ENCODE measurements at regions of chr6 and their contacts with region 1.

Region 1: DNA sequence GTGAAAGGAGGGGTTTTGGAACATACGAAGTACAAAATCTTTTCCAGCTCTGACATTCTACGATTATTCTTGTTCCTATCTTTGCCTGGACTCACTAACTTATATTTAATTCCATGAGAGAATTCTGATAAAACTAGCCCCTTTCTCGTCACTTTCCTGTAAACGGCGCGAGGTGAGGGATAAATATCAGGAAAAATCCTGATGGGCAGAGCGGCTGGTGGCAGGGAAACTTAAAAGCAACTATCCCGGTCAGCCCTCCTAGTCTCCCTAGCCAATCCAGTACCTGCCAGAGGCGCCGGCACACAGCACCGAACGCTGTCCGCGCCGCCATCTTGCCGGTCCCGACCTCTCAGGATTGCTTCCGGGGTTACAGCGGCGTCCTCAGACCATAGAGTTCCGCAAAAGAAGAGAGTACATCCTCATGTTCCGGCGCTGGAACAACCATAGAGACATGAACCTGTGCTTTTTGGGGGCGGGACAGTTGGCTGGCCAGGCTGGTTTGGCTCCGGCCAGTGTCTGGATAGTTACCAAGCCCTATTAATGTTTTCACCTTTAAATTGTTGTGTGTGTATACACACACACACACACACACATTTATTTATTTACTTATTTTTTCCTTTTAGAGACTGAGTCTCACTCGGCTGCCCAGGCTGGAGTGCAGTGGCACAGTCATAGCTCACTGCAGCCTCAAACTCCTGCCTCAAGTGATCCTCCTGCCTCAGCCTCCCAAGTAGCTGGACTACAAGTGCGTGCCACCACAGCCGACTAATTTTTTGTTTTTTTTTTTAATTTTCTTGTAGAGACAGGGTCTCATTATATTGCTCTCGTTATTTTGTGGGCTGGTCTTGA is at the start of gene MRPS10:
- DNase-seq: peak; percentile 94
- H3K4me3 ChIP-seq: peak within 1 kb of the TSS; percentile 49 to 99 (median 92)
- H3K27ac ChIP-seq: peak within 1 kb of the TSS; percentile 77
- H3K4me1 ChIP-seq: peaks cover 5% of the 10 kb centered on the region
- H3K27me3 ChIP-seq: no peaks in the 10 kb centered on the region
- CTCF ChIP-seq: no peak
- POLR2A ChIP-seq: peak; percentile 90
- total RNA-seq, gene MRPS10: 35.3 and 37.7 TPM in 2 replicates

Region 2: DNA sequence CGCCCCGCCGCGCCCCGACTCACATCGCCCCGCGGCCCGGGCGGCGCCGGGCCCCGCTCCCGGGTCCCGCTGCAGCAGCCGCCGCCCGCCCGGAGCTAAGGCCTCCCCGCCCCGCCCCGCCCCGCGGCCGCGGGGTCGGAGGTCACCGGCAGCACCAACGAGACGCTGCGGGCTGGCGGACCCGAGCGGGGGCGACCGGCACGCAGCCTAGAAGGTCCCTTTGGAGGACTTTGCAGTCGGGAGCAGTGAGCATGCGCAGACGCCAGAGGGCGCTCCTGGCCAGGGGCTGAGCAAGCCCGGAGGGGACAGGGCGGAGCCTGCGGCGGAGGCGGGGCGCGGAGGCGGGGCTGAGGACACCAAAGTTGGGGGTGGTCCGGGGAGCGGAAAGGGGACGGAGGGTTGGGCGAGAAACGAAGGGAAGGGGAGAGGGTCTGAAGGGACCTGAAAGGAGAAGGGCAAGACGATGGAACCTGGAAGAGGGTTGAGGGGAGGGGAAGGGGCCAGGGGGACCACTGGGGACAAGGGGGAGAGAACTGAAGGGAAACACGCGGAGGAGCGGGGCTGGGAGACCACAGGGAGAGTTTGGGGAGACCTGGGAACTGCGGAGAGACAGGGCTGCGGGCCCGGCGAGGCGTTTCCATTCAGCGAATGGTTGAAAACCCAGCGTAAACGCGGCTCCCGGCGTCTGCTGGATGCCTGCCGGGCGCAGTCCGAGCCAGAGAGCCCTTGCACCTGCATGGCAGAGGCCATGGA is 437.8 kb before region 1 on chr6 and contains the start of gene FRS3:
- CTCF ChIA-PET with region 1: interaction called, 4 read pairs
- POLR2A ChIA-PET with region 1: no interaction called
- dilution Hi-C with region 1: no loop called
- intact Hi-C with region 1: loop called (anchors 2 kb)
- DNase-seq: peak; percentile 95
- H3K4me3 ChIP-seq: peak within 1 kb of the TSS; percentile 73 to 86 (median 78)
- H3K27ac ChIP-seq: no peak within 1 kb of the TSS
- H3K4me1 ChIP-seq: peaks cover 18% of the 10 kb centered on the region
- H3K27me3 ChIP-seq: no peaks in the 10 kb centered on the region
- CTCF ChIP-seq: peak; percentile 93 to 98
- POLR2A ChIP-seq: no peak
- total RNA-seq, gene FRS3: 4.4 and 5.3 TPM in 2 replicates

Region 3: DNA sequence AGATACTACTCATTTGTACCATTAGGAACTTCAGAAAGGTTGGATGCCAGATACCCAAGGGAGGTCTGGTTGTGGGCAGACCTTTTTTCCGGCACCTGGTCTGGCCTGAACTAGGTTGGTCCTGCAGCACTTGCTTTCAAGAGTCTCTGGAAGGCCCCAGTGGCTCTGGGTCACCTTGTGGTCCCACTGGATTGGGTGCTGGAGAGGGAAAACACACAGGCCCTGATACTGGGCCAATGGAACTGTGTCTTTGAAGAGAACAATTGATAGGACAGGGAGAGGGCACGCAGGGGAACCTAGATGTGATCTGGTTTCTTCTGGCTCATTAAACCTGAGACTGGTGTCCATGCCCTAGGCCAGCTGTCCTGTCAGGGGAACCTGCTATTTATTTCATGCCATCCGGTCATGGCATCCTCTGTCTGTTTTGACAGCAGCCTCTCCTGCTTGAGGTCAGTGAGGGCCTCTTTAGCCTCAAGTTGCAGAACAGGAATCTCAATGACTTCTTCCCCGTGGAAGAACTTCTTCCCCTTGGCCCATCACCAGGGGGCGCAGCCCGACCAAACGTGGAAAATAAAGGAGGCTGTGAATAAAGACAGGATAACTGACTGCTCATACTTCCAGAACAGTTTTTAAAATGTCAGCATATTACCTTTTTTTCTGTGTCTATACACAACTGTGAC is 142.4 kb before region 1 on chr6:
- CTCF ChIA-PET with region 1: interaction called, 32 read pairs
- POLR2A ChIA-PET with region 1: no interaction called
- dilution Hi-C with region 1: no loop called
- intact Hi-C with region 1: loop called (anchors 1 kb)
- DNase-seq: peak; percentile 72
- H3K4me3 ChIP-seq: no peak overlapping the region
- H3K27ac ChIP-seq: no peak overlapping the region
- H3K4me1 ChIP-seq: no peaks in the 10 kb centered on the region
- H3K27me3 ChIP-seq: no peaks in the 10 kb centered on the region
- CTCF ChIP-seq: peak; percentile 77 to 84
- POLR2A ChIP-seq: peak; percentile 10

Region 4: GRCh38 chr6:42166444-42167141 is 51.1 kb before region 1 on chr6:
- CTCF ChIA-PET with region 1: interaction called, 26 read pairs
- POLR2A ChIA-PET with region 1: no interaction called
- dilution Hi-C with region 1: no loop called
- intact Hi-C with region 1: loop called (anchors 5 kb)
- DNase-seq: peak; percentile 72
- H3K4me3 ChIP-seq: no peak overlapping the region
- H3K27ac ChIP-seq: no peak overlapping the region
- H3K4me1 ChIP-seq: no peaks in the 10 kb centered on the region
- H3K27me3 ChIP-seq: peaks cover 0 to 4% of the 10 kb centered on the region in 2 experiments
- CTCF ChIP-seq: peak; percentile 82 to 91
- POLR2A ChIP-seq: no peak

Region 5: DNA sequence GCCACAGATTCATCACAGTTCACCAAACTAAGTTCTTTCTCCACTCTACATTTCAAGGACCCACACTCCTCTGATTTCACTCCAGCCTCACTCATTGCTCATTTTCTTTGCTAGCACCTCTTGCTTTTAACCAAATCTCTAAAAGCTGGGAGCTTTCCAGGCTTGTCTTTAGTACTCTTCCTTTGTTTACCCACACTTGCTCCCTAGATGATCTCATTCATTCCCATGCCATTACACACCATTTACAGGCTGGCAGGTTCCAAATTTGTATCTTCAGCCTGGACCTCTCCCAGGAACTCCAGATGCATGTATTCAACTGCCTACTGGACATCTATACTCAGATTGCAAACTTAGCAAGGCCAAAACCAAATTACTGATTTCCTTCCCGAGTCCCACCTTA is 17.7 kb before region 1 on chr6:
- CTCF ChIA-PET with region 1: interaction called, 22 read pairs
- POLR2A ChIA-PET with region 1: no interaction called
- dilution Hi-C with region 1: no loop called
- intact Hi-C with region 1: no loop called
- DNase-seq: no peak
- H3K4me3 ChIP-seq: no peak overlapping the region
- H3K27ac ChIP-seq: no peak overlapping the region
- H3K4me1 ChIP-seq: peaks cover 6% of the 10 kb centered on the region
- H3K27me3 ChIP-seq: no peaks in the 10 kb centered on the region
- CTCF ChIP-seq: no peak
- POLR2A ChIP-seq: no peak

Region 6: DNA sequence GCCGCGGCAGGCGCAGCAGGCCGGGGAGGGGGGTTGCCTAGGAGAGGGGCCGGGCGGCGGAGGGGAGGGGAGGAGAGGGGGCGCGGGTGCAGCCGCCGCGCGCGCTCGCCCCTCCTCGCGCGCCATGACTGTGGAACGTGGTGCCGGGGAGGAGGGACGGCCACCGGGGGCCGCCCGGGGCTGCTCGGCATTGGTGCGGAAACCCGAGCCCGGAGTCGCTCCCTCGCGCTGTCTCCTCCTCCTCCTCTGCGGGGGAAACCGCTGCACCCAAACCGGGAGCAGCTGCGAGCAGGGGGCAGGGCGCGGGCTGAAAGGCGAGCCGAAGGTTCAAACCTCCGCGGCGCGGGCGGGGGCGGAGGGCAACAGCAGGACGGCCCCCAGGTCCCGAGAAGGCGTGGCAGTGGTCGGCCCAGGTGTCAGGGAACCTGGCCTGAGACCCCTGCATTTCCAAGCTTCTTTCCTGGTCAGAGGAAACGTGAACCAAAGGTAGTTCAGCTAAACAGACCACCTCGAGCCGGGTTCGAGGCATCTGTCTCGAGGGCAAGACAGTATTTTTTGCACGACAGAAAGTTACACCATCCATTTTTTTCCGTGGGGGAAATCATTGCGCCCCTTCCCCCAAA is 235.4 kb after region 1 on chr6:
- CTCF ChIA-PET with region 1: no interaction called
- POLR2A ChIA-PET with region 1: no interaction called
- dilution Hi-C with region 1: no loop called
- intact Hi-C with region 1: loop called (anchors 2 kb)
- DNase-seq: peak; percentile 52
- H3K4me3 ChIP-seq: peak overlapping the region; percentile 49 to 73 (median 51)
- H3K27ac ChIP-seq: no peak overlapping the region
- H3K4me1 ChIP-seq: peaks cover 9% of the 10 kb centered on the region
- H3K27me3 ChIP-seq: peaks cover 11 to 37% of the 10 kb centered on the region in 2 experiments
- CTCF ChIP-seq: no peak
- POLR2A ChIP-seq: no peak

Region 7: DNA sequence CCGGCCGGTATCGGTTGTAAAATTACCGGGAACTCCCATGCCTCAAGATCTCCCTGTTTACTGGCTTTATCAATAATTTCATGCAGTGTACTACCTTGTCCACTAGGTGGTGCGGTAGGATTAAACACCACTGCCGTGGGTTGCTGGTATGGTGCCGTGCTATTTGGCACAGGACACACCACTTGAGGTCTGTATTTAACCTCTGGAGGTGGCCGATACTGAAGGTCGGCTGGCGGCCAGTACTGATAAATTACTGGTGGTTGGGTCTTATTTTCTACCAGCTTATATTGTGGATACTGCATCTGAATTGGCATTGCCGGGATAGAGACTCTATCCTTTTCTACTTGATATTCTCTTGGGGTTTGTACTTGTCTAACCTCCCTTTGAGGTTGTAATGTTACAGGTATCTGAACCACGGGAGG is 683.8 kb after region 1 on chr6:
- CTCF ChIA-PET with region 1: no interaction called
- POLR2A ChIA-PET with region 1: no interaction called
- dilution Hi-C with region 1: no loop called
- intact Hi-C with region 1: no loop called
- DNase-seq: peak; percentile 85
- H3K4me3 ChIP-seq: no peak overlapping the region
- H3K27ac ChIP-seq: no peak overlapping the region
- H3K4me1 ChIP-seq: peaks cover 7% of the 10 kb centered on the region
- H3K27me3 ChIP-seq: no peaks in the 10 kb centered on the region
- CTCF ChIP-seq: peak; percentile 64 to 79
- POLR2A ChIP-seq: no peak

Measured in endothelial cell of umbilical vein (primary cell).